ENCODE measurements at regions of chr11 and their contacts with region 1.

Region 1: GRCh38 chr11:11028017-11028692 is 170.3 kb upstream of the ZBED5 start:
- DNase-seq: peak; percentile 53
- CTCF ChIP-seq: peak; percentile 86

Region 2: DNA sequence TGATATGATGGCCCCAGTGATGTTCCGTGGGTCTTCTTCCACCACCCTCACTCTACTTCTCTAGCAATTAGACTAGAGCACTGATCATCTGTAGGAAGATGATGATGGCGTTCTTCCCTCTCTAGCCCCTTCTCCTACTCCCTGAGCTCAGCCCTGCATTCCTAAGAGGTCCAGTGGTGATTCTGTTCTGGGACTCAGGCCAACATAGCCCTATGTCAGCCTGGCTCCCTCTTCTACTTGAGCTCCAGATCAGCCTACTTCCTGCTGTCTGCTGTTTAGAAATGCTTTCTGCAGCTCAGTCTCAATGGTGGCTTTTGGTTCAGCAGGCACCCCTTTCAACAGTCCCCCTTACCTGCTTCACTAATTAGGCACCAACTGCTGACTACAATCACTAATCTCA is 84.2 kb before region 1 on chr11:
- CTCF ChIA-PET with region 1: interaction called, 18 read pairs
- POLR2A ChIA-PET with region 1: no interaction called
- DNase-seq: no peak
- CTCF ChIP-seq: no peak

Region 3: DNA sequence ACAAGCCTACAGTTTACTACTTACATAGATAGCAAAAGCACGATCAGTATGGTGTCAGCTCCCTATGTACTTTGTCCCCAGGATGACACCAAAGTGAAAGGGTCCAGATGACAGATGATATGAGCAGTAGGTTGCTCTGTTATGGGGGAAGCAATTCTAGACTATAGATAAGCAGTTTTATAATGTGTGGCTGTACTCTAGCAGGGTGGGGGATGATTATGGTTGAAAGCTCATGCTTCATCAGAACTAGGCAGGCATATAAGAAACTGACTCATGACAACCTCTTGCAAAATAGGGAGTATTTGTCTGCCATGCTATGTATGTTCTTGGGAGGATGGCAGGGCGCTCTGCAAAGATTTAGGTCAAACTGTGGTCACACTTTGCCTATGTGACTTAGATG is 12.1 kb before region 1 on chr11:
- CTCF ChIA-PET with region 1: interaction called, 15 read pairs
- POLR2A ChIA-PET with region 1: no interaction called
- DNase-seq: no peak
- CTCF ChIP-seq: no peak

Region 4: DNA sequence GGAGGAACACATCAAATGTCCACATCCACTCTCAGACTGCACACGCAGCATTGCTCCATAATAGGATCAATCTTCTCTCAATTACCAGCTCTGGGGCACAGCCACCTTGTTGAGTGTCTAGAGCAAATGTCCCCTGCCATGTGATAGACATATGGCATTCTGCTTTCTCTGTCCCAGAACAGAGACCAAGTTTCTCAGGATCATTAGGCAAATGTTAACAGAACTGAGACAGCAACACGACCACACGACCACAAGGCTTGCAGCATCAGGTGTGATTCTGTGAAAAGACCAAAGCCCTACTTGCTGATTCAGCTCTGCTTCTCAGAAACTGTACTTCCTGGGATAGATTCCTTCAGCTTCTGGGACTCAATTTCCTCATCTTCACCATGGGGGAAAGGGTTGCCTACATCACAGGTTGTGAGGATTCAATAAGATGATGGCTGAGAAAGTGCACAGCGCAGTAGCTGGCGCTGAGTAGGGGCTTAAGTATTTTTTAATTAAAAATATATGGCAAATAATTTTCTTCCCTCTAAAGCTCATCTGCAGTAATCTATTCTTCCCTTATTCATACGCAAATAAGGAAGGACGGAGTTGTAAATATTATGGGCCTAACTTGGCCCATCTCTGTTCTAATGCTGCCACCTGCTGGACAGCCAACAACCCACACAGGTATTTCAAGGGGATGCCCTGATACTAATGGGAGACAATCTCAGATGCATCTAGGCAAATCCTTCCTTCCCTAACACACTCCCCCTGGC is 759.3 kb after region 1 on chr11:
- CTCF ChIA-PET with region 1: interaction called, 102 read pairs
- POLR2A ChIA-PET with region 1: no interaction called
- DNase-seq: peak; percentile 59
- CTCF ChIP-seq: peak; percentile 70